ENCODE measurements at regions of chr10 and their contacts with region 1.

Region 1: DNA sequence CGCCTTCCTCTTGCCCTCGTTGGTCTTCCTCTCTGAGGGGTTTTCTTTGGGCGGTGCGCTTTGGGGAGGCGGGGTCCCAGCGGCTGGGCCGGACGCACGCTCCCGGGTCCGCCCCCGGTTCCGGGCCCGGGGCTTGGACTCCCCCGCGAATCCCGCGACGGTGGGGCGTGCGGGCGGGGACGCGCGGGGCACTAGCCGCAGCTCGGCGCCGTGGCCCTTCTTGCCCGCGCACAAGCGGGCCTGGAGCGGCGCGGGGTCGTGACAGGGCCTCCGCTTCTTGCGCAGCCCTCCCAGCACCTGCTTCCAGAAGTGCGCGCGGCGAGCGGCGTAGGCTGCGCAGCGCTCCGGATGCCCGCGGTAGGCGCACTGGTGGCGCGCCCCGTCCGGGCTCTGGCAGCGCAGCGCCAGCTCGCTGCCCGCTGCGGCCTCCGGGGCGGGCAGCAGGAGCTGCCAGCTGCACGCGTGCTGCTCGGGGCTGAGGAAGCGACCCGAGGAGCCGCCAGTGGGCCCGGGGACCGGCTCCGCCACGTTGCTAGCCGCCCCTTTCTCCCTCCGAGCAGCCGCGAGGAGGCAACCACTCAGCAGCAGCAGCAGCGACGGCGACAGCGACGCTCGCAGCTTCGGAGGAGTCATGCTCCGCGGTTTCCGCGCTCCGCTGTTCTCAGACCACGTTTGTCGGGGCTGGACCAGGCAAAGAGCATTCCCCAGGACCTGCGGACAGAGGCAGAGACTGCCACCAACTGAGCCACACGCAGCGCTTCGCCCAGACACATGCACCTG is 759 bp downstream of the FGFBP3 start:
- DNase-seq: peak; percentile 84
- ATAC-seq: peak; percentile 89
- H3K4me3 ChIP-seq: peak overlapping the region; percentile 62 to 85
- H3K27ac ChIP-seq: peak overlapping the region; percentile 69
- H3K4me1 ChIP-seq: peaks cover 8 to 23% of the 10 kb centered on the region in 2 experiments; a peak in 3 of 4 replicates
- H3K27me3 ChIP-seq: no peaks in the 10 kb centered on the region
- CTCF ChIP-seq: peak; percentile 49 to 52 (median 50)
- POLR2A ChIP-seq: no peak
- RAD21 ChIP-seq: peak; percentile 53

Region 2: GRCh38 chr10:90885176-90885575 is 1023.4 kb before region 1 on chr10:
- CTCF ChIA-PET with region 1: no interaction called
- POLR2A ChIA-PET with region 1: no interaction called
- RAD21 ChIA-PET with region 1: no interaction called
- intact Hi-C with region 1: loop called (anchors 10 kb)
- DNase-seq: no peak
- ATAC-seq: no peak
- H3K4me3 ChIP-seq: no peak overlapping the region
- H3K27ac ChIP-seq: no peak overlapping the region
- H3K4me1 ChIP-seq: no peaks in the 10 kb centered on the region; a peak in 1 of 4 replicates
- H3K27me3 ChIP-seq: no peaks in the 10 kb centered on the region
- CTCF ChIP-seq: no peak
- POLR2A ChIP-seq: no peak
- RAD21 ChIP-seq: no peak

Region 3: DNA sequence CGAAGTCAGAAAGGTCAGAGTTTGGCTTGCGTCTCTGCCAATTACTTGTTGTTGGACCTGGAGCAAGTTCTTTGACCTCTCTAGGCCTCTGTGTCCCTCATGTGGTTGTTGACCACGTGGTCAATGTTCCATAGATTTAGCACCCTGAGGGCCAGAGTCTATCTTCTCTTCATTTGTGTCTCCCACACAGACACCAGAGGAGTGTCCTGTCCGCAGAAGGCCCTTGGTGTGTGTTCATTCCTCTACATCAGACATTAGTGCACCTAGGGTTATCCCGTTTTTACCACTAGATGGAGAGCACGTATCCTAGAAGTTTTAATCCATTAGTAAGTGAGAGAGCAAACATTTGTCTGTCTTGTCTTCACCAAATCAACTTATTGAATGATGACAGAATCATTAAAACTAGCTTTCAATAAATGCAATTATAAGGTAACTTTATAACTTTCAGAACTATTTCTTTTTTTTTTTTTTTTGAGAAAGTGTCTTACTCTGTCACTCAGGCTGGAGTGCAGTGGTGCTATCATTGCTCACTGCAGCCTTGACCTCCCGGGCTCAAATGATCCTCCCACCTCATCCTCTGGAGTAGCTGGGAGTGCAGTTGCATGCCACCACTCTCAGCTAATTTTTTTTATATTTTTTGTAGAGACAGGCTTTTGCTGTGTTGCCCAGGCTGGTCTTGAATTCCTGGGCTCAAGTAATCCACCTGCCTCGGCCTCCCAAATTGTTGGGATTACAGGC is 865.2 kb before region 1 on chr10:
- CTCF ChIA-PET with region 1: no interaction called
- POLR2A ChIA-PET with region 1: no interaction called
- RAD21 ChIA-PET with region 1: no interaction called
- intact Hi-C with region 1: loop called (anchors 10 kb)
- DNase-seq: peak; percentile 21
- ATAC-seq: peak; percentile 90
- H3K4me3 ChIP-seq: no peak overlapping the region
- H3K27ac ChIP-seq: no peak overlapping the region
- H3K4me1 ChIP-seq: no peaks in the 10 kb centered on the region
- H3K27me3 ChIP-seq: no peaks in the 10 kb centered on the region
- CTCF ChIP-seq: peak; percentile 49 to 60 (median 59); a peak in 5 of 6 replicates
- POLR2A ChIP-seq: no peak
- RAD21 ChIP-seq: peak; percentile 76

Region 4: GRCh38 chr10:91271886-91272285 is 636.6 kb before region 1 on chr10:
- CTCF ChIA-PET with region 1: no interaction called
- POLR2A ChIA-PET with region 1: no interaction called
- RAD21 ChIA-PET with region 1: no interaction called
- intact Hi-C with region 1: no loop called
- DNase-seq: no peak
- ATAC-seq: no peak
- H3K4me3 ChIP-seq: no peak overlapping the region
- H3K27ac ChIP-seq: no peak overlapping the region
- H3K4me1 ChIP-seq: no peaks in the 10 kb centered on the region
- H3K27me3 ChIP-seq: no peaks in the 10 kb centered on the region
- CTCF ChIP-seq: no peak
- POLR2A ChIP-seq: no peak
- RAD21 ChIP-seq: no peak

Region 5: GRCh38 chr10:91389636-91390512 is 518.7 kb before region 1 on chr10:
- CTCF ChIA-PET with region 1: no interaction called
- POLR2A ChIA-PET with region 1: no interaction called
- RAD21 ChIA-PET with region 1: interaction called in 1 of 2 experiments, 8 read pairs
- intact Hi-C with region 1: loop called (anchors 5 kb)
- DNase-seq: peak; percentile 37
- ATAC-seq: peak; percentile 84
- H3K4me3 ChIP-seq: peak overlapping the region in 1 of 2 experiments; percentile 12; a peak in 1 of 4 replicates
- H3K27ac ChIP-seq: no peak overlapping the region
- H3K4me1 ChIP-seq: peaks cover 0 to 3% of the 10 kb centered on the region in 2 experiments; a peak in 1 of 4 replicates
- H3K27me3 ChIP-seq: peaks cover 21% of the 10 kb centered on the region
- CTCF ChIP-seq: peak; percentile 44 to 65 (median 65); a peak in 5 of 6 replicates
- POLR2A ChIP-seq: no peak
- RAD21 ChIP-seq: peak; percentile 65

Region 6: GRCh38 chr10:91632671-91633550 is 275.6 kb before region 1 on chr10 and contains the start of gene PPP1R3C:
- CTCF ChIA-PET with region 1: interaction called, 10 read pairs
- POLR2A ChIA-PET with region 1: no interaction called
- RAD21 ChIA-PET with region 1: no interaction called
- intact Hi-C with region 1: no loop called
- DNase-seq: no peak
- ATAC-seq: no peak
- H3K4me3 ChIP-seq: no peak within 1 kb of the TSS
- H3K27ac ChIP-seq: no peak within 1 kb of the TSS
- H3K4me1 ChIP-seq: no peaks in the 10 kb centered on the region
- H3K27me3 ChIP-seq: no peaks in the 10 kb centered on the region
- CTCF ChIP-seq: no peak
- POLR2A ChIP-seq: no peak
- RAD21 ChIP-seq: no peak
- total RNA-seq, gene PPP1R3C: 0.20 TPM

Region 7: GRCh38 chr10:91758303-91759146 is 150.0 kb before region 1 on chr10:
- CTCF ChIA-PET with region 1: interaction called, 29 read pairs
- POLR2A ChIA-PET with region 1: interaction called, 4 read pairs
- RAD21 ChIA-PET with region 1: interaction called, 3 to 10 read pairs
- intact Hi-C with region 1: loop called (anchors 1 kb)
- DNase-seq: peak; percentile 65
- ATAC-seq: peak; percentile 86
- H3K4me3 ChIP-seq: no peak overlapping the region
- H3K27ac ChIP-seq: no peak overlapping the region
- H3K4me1 ChIP-seq: no peaks in the 10 kb centered on the region
- H3K27me3 ChIP-seq: no peaks in the 10 kb centered on the region
- CTCF ChIP-seq: peak; percentile 46 to 77 (median 75)
- POLR2A ChIP-seq: no peak
- RAD21 ChIP-seq: peak; percentile 93

Region 8: DNA sequence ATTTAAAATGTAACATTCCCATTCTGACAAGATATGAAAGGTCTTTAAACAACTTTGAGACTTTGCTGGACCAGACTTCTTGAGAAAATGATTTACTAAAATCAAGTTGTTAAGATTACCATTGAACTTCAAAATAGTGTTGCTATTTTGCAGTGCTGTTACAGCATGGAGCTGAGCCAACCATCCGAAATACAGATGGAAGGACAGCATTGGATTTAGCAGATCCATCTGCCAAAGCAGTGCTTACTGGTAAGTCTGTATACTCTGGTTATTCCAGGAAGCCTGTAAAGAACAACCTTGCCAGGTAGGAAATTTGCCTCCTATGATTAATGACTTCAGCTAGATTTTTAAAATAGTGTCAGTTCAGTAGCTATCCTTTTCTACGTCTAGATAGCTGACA is 91.5 kb before region 1 on chr10:
- CTCF ChIA-PET with region 1: no interaction called
- POLR2A ChIA-PET with region 1: no interaction called
- RAD21 ChIA-PET with region 1: no interaction called
- intact Hi-C with region 1: no loop called
- DNase-seq: no peak
- ATAC-seq: no peak
- H3K4me3 ChIP-seq: no peak overlapping the region
- H3K27ac ChIP-seq: no peak overlapping the region
- H3K4me1 ChIP-seq: no peaks in the 10 kb centered on the region
- H3K27me3 ChIP-seq: no peaks in the 10 kb centered on the region
- CTCF ChIP-seq: no peak
- POLR2A ChIP-seq: no peak
- RAD21 ChIP-seq: no peak

Region 9: DNA sequence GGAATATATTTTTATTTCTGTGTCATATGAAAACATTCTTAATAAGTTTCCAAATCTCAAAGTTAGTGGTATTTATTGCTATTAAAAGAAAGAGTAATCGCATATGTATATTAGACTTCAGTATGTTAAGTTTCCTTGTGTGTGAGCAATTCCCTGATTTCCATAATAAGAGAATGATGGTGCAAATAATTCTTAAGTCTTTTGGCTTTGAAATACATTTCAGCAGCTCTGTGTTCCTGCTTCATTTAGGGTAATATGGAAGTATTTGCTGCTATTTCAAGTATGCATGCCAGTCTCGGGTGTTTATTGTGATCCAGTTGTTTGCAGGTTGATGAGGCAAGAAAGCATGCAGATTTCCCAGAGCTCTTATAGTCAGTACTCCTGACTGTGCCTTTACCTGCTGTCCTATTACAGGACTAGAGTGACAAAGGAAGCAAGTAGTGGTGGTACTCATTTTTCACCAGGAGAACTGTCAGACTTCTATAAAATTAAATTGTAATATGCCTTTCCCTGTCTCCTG is 42.9 kb before region 1 on chr10:
- CTCF ChIA-PET with region 1: no interaction called
- POLR2A ChIA-PET with region 1: no interaction called
- RAD21 ChIA-PET with region 1: no interaction called
- intact Hi-C with region 1: no loop called
- DNase-seq: no peak
- ATAC-seq: no peak
- H3K4me3 ChIP-seq: no peak overlapping the region
- H3K27ac ChIP-seq: no peak overlapping the region
- H3K4me1 ChIP-seq: no peaks in the 10 kb centered on the region
- H3K27me3 ChIP-seq: no peaks in the 10 kb centered on the region
- CTCF ChIP-seq: no peak
- POLR2A ChIP-seq: no peak
- RAD21 ChIP-seq: no peak

Measured in HCT116 (cell line).